Natural killer cell (primary cell): ENCODE measurements at regions of chr16 and their contacts with region 1.

Region 1: DNA sequence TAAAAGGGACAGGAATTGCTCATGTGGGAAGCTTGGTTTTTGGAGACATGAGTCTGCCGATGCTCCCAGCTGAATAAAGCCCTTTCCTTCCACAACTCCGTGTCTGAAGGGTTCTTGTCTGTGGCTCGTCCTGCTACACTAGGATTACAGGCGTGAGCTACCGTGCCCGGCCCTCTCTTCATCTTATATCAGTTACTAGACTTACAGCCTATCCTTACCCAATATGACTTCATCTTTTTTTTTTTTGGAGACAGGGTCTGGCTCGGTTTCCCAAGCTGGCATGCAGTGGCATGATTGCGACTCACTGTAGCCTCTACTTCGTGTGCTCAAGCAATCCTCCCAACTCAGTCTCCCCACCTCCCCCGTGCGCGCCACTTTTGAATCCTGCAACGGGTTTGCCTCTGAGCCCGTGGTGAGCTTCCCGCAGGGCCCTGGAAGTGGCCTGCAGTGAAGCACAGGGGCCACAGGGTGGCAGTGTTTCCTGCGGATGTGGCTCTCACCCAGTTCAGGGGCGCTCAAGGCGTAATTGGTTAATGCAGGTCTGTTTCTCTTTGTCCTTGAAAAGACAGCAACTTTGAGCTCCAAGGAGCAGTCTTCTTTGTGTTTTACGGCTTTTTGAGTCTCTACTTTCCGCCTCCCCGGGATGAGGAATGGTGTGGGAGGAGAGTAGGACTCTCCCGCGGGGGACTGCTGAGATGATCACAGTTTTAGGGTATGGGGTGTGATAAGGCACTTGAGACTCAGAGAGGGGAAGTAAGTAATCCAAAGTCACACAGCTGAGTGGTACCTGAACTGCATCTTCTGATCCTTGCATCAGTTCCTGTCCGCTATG is 22.7 kb upstream of the GPRC5B start:
- DNase-seq: peak; percentile 44 to 82
- ATAC-seq: peak; percentile 93 to 99 (median 95)
- H3K4me3 ChIP-seq: no peak overlapping the region
- H3K4me3 Mint-ChIP-seq: peak overlapping the region; percentile 59
- H3K27ac ChIP-seq: no peak overlapping the region
- H3K27ac Mint-ChIP-seq: no peak overlapping the region
- H3K4me1 ChIP-seq: peaks cover 7% of the 10 kb centered on the region
- H3K4me1 Mint-ChIP-seq: peaks cover 7 to 10% of the 10 kb centered on the region in 2 donors
- H3K27me3 ChIP-seq: no peaks in the 10 kb centered on the region
- H3K27me3 Mint-ChIP-seq: peaks cover 14 to 20% of the 10 kb centered on the region in 2 donors
- CTCF ChIP-seq: peak; percentile 88

Region 2: DNA sequence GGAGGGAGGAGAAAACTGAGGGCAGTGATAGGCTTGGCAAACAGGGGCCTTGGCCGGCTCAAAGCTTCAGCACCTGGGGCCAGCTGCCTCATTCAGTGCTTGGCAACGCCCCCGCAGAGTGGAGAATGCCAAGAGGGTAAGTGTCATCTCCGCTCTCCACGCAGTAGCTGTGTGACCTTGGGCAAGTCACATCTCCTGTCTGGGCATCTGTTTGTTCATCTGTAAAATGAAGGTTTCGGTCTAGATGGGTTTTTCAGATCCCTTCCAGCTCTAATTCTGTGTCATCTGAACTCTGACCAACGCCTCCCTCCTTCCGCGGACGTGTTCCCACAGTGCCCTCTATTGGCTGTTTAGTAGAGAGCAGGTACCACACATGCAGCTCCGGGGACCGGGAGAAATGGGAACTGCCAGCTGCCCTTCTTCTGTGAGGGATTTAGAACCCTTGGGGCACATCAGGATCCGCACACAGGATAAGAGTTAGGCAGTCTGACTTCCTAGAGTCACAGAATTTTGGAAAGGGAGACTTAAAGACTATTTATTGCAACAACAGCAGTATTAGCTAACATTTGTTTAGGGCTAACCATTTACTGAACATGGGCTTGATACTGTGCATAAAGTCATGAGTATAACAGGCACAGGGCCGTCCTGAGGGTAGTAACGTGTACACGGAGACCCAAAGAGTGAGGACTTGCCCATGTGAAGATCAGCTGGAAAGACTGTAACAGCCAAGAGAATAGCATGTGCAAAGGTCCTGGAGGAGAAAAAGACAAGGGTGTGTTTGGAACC is 393.1 kb after region 1 on chr16:
- intact Hi-C with region 1: loop called (anchors 5 kb)
- DNase-seq: peak in 1 of 2 donors; percentile 44
- ATAC-seq: peak; percentile 47 to 66 (median 56)
- H3K4me3 ChIP-seq: no peak overlapping the region
- H3K4me3 Mint-ChIP-seq: no peak overlapping the region
- H3K27ac ChIP-seq: no peak overlapping the region
- H3K27ac Mint-ChIP-seq: no peak overlapping the region
- H3K4me1 ChIP-seq: no peaks in the 10 kb centered on the region
- H3K4me1 Mint-ChIP-seq: peaks cover 4% of the 10 kb centered on the region in 2 donors
- H3K27me3 ChIP-seq: no peaks in the 10 kb centered on the region
- H3K27me3 Mint-ChIP-seq: peaks cover 10 to 22% of the 10 kb centered on the region in 2 donors
- CTCF ChIP-seq: peak; percentile 21

Region 3: DNA sequence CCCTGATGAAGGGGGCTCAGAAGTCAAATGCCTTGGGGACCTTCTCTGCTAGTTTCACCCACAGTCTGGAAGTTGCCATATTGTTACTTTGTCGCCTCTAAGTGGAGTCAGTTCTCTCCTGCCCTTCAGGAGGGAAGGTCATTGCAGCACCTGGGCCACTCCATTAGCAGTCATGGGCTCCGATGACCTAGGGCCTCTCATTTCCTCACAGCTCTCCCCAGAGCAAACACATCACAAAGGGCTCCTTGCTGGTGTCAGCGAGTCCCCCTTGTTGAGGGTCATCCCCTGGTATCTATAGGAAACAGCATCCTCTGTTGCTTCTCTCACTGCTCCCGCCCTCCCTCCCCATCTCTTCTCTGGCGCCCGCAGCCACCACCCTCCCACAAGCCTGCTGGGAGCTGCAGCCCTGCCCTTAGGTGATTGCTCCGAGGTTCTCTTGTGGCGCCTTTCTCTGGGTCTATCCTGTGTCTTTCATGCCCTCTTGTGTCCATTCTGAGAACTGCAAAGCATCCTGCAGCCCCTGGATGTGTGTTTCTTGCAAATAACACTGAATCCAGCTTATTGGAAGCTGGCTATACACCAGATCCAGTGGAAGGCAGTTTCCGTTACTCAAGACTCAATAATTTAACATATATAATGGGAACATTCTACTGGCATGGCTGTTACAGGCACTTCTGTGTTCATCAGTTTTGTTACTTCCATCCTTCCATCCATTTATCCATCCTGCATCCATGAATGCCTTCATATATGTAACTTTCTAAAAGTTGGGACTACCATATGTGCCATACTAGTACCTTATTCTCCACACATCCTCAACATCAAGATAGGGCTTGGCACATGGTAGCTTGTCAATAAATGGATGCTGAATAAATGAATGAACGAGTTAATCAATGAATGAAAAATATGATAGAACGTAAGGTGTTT is 476.0 kb after region 1 on chr16:
- intact Hi-C with region 1: loop called (anchors 5 kb)
- DNase-seq: peak in 1 of 2 donors; percentile 64
- ATAC-seq: peak; percentile 34 to 76 (median 51)
- H3K4me3 ChIP-seq: no peak overlapping the region
- H3K4me3 Mint-ChIP-seq: no peak overlapping the region
- H3K27ac ChIP-seq: no peak overlapping the region
- H3K27ac Mint-ChIP-seq: no peak overlapping the region
- H3K4me1 ChIP-seq: no peaks in the 10 kb centered on the region
- H3K4me1 Mint-ChIP-seq: no peaks in the 10 kb centered on the region
- H3K27me3 ChIP-seq: no peaks in the 10 kb centered on the region
- H3K27me3 Mint-ChIP-seq: peaks cover 3 to 16% of the 10 kb centered on the region in 2 donors
- CTCF ChIP-seq: peak; percentile 56

Region 4: GRCh38 chr16:20704281-20704680 is 796.9 kb after region 1 on chr16:
- intact Hi-C with region 1: loop called (anchors 10 kb)
- DNase-seq: no peak
- ATAC-seq: no peak
- H3K4me3 ChIP-seq: no peak overlapping the region
- H3K4me3 Mint-ChIP-seq: no peak overlapping the region
- H3K27ac ChIP-seq: no peak overlapping the region
- H3K27ac Mint-ChIP-seq: no peak overlapping the region
- H3K4me1 ChIP-seq: no peaks in the 10 kb centered on the region
- H3K4me1 Mint-ChIP-seq: no peaks in the 10 kb centered on the region
- H3K27me3 ChIP-seq: no peaks in the 10 kb centered on the region
- H3K27me3 Mint-ChIP-seq: peaks cover 3 to 4% of the 10 kb centered on the region in 2 donors
- CTCF ChIP-seq: no peak